ENCODE measurements at regions of chr5 and their contacts with region 1.

Region 1: DNA sequence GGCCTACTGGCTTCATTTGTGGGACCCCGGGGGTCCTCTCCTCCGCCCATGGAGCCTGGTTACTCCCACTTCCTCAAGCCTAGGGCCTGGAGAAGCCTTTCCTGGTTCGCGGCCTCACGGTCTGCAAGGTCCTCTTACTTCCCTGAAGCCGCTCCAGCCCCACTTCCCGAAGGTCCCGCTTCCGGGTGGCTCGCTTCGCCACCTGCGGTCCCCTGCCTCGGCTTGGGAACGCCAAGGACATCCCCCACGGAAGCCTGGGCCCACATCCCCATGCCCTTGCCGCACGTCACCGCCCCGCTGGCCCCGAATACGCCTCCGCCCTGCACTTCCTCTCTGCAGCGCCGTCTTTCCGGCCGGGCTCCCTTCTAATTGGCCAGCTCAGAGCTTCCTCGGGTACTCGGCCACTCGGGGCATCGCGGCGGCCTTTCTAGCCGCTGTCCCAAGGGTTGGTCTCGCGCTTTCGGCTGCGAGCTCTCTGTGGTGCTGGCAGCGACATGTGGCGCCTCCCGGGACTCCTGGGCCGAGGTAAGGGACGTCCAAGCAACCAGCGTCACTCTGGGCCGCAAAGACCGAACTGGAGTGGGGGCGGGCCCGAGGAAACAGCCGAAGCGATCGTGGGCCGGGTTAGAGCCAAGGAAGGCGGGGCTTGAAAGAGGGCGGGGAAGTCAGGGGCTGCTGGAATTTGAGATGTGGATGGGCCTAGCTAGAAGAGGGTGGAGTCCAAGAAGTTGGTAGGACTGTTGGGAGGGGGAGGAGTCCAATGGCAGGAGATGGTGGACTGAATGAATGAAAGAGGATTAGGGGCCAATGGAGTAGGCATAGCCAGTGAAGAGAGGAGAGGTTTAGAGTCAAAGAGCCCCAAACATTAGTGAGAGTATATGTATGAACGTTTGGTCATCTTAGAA is at the start of gene DELE1:
- DNase-seq: peak; percentile 96 to 98 (median 97)
- ATAC-seq: peak; percentile 97 to 99 (median 98)
- H3K4me3 ChIP-seq: peak within 1 kb of the TSS; percentile 19 to 90 (median 66)
- H3K27ac ChIP-seq: peak within 1 kb of the TSS; percentile 89 to 99 (median 96)
- H3K4me1 ChIP-seq: peaks cover 4 to 46% (median 24%) of the 10 kb centered on the region in 12 donors
- H3K27me3 ChIP-seq: no peaks in the 10 kb centered on the region
- CTCF ChIP-seq: peak in 3 of 12 donors; percentile 8 to 18 (median 9)
- POLR2A ChIP-seq: peak; percentile 13 to 87
- total RNA-seq, gene DELE1: 63.1 to 174 (median 96.0) TPM

Region 2: GRCh38 chr5:141691867-141692532 is 231.7 kb before region 1 on chr5:
- intact Hi-C with region 1: loop called in 1 of 10 experiments (anchors 5 kb)
- DNase-seq: peak; percentile 85 to 93 (median 87)
- ATAC-seq: peak; percentile 79 to 91 (median 90)
- H3K4me3 ChIP-seq: peak overlapping the region in 11 of 12 donors; percentile 11 to 51 (median 37)
- H3K27ac ChIP-seq: no peak overlapping the region
- H3K4me1 ChIP-seq: peaks cover 0 to 28% (median 10%) of the 10 kb centered on the region in 12 donors
- H3K27me3 ChIP-seq: peaks cover 0 to 3% (median 0%) of the 10 kb centered on the region in 9 donors
- CTCF ChIP-seq: peak; percentile 98 to 100 (median 99)
- POLR2A ChIP-seq: no peak

Measured in heart left ventricle (tissue), 16 donors.